ENCODE measurements at regions of chr2 and their contacts with region 1.

Region 1: DNA sequence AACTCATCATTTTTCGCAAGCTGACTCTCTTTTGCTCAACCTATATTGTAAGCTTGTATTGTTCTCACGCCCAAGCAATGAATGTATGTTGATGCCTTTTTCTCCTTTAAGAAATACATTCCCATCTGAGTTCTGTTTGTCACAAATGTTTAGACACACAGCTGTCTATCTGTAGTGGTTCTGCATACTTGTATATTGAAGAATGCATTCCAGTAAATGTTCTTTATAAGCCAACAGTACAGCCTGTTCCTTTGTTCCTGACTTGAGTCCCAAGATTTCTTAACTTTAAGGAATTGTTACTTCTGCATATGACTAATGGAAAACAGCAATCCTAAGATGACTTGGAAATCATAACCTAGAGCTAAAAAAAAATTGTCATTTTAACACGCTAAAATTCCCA is 849.1 kb upstream of the POU3F3 start:
- DNase-seq: no peak
- H3K4me3 Mint-ChIP-seq: no peak overlapping the region
- H3K27ac Mint-ChIP-seq: no peak overlapping the region
- H3K4me1 Mint-ChIP-seq: no peaks in the 10 kb centered on the region
- H3K27me3 Mint-ChIP-seq: peaks cover 62% of the 10 kb centered on the region
- CTCF ChIP-seq: no peak

Region 2: GRCh38 chr2:104016801-104017200 is 12.0 kb after region 1 on chr2:
- CTCF ChIA-PET with region 1: no interaction called
- POLR2A ChIA-PET with region 1: no interaction called
- intact Hi-C with region 1: loop called (anchors 1 kb)
- DNase-seq: no peak
- H3K4me3 Mint-ChIP-seq: no peak overlapping the region
- H3K27ac Mint-ChIP-seq: no peak overlapping the region
- H3K4me1 Mint-ChIP-seq: no peaks in the 10 kb centered on the region
- H3K27me3 Mint-ChIP-seq: peaks cover 77% of the 10 kb centered on the region
- CTCF ChIP-seq: no peak

Region 3: GRCh38 chr2:104068665-104069064 is 63.8 kb after region 1 on chr2:
- CTCF ChIA-PET with region 1: no interaction called
- POLR2A ChIA-PET with region 1: no interaction called
- intact Hi-C with region 1: no loop called
- DNase-seq: no peak
- H3K4me3 Mint-ChIP-seq: no peak overlapping the region
- H3K27ac Mint-ChIP-seq: no peak overlapping the region
- H3K4me1 Mint-ChIP-seq: no peaks in the 10 kb centered on the region
- H3K27me3 Mint-ChIP-seq: peaks cover 73% of the 10 kb centered on the region
- CTCF ChIP-seq: no peak

Region 4: DNA sequence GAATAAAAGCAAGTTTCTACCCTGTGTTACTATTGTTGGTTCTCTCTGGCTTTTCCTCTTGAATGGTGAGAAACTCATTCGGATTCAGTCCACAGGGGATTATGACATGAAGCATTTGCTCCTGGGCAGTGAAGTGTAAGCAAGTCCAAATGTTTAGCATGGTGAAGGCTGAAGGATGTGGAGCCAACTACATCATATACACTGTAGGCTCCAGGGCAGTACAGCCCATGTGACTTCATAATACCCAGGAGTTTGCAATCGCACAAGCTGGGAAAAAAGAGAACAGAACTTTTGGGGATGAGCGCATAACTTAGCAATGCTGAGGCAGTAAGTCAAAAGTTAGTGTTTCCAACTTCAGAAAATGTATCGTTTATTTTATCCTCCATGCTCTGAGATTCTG is 153.4 kb after region 1 on chr2:
- CTCF ChIA-PET with region 1: no interaction called
- POLR2A ChIA-PET with region 1: no interaction called
- intact Hi-C with region 1: no loop called
- DNase-seq: no peak
- H3K4me3 Mint-ChIP-seq: no peak overlapping the region
- H3K27ac Mint-ChIP-seq: no peak overlapping the region
- H3K4me1 Mint-ChIP-seq: no peaks in the 10 kb centered on the region
- H3K27me3 Mint-ChIP-seq: peaks cover 93% of the 10 kb centered on the region
- CTCF ChIP-seq: no peak